PC-3 (cell line): ENCODE measurements at regions of chr19 and their contacts with region 1.

Region 1: DNA sequence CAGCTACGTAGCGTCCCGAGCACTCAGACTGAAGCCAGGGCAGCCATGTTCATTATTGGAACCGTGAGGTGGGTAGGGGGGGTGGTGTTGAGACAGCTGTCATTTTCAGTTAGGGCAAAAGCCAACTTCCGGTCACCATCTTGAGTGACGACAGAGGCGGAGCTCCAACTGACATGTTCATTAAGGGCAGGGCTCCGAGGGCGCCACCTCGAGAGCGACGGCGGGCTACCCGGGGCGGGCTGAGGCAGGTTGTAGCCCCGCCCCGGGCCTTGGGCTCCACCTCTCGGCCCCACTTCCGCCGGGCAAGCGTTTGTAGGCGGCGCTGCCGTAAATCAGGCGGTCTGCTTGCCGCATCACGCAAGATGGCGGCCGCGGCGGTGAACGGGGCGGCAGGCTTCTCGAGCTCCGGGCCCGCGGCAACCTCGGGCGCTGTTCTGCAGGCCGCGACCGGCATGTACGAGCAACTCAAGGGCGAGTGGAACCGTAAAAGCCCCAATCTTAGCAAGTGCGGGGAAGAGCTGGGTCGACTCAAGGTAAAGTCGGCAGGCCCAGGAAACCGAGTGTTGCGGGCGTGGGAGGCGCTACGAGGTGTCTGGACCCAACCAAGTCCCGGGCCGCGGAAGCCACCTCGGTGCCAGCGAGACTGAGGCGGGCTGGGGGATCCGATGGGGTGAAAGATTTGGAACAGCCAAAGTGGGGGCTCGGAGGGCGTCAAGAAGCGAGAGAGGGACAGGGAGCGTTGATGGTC is at the start of gene PSMD8:
- DNase-seq: peak; percentile 96
- ATAC-seq: peak; percentile 97
- H3K4me3 ChIP-seq: peak within 1 kb of the TSS; percentile 84
- H3K27ac ChIP-seq: peak within 1 kb of the TSS; percentile 64
- H3K4me1 ChIP-seq: peaks cover 15% of the 10 kb centered on the region
- H3K27me3 ChIP-seq: no peaks in the 10 kb centered on the region
- CTCF ChIP-seq: peak; percentile 27; the same call in 1 of the 2 replicates
- total RNA-seq, gene PSMD8: 290 and 367 TPM in 2 replicates

Region 2: DNA sequence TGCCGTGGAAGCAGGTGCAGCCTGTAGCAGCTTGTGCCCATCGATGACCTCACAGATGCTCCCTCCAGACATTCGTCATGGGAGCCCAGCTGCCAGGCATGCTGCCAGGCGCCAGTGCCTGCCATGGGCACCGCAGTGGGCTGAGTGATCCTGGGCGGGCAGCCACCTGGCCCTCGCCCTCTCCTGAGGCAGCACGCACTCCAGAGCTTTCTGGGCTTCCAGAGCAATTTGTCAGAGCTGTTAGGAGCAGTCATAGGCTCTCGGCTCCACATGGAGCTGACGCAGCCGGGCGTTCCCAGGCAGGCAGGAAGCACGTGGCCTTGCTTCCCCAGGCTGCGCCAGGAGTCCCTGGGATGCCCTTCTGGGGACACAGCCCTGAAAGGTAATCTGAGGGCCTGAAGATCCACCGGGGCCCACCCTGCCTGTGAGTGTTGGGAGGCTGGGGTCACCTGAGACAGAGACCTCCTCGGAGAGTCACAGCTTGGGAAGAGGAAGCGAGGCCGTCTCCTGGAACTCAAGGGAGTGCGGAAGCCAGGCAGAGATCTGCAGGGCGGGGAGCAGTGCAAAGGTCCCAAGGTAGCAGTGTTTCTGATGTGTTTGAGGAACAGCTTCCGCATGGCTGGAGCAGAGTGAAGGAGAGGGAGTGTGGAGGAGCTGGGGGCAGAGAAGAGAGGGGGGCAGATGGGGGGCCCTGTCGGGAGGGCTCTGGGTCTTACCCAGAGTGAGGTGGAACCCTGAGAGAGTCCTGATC is 201.1 kb before region 1 on chr19:
- CTCF ChIA-PET with region 1: no interaction called
- POLR2A ChIA-PET with region 1: no interaction called
- intact Hi-C with region 1: no loop called
- DNase-seq: no peak
- ATAC-seq: no peak
- H3K4me3 ChIP-seq: no peak overlapping the region
- H3K27ac ChIP-seq: no peak overlapping the region
- H3K4me1 ChIP-seq: no peaks in the 10 kb centered on the region
- H3K27me3 ChIP-seq: no peaks in the 10 kb centered on the region
- CTCF ChIP-seq: no peak

Region 3: GRCh38 chr19:38209152-38209551 is 165.5 kb before region 1 on chr19:
- CTCF ChIA-PET with region 1: no interaction called
- POLR2A ChIA-PET with region 1: interaction called, 10 read pairs
- intact Hi-C with region 1: no loop called
- DNase-seq: no peak
- ATAC-seq: no peak; the same call in 1 of the 2 replicates
- H3K4me3 ChIP-seq: no peak overlapping the region
- H3K27ac ChIP-seq: no peak overlapping the region
- H3K4me1 ChIP-seq: no peaks in the 10 kb centered on the region
- H3K27me3 ChIP-seq: no peaks in the 10 kb centered on the region
- CTCF ChIP-seq: no peak

Region 4: GRCh38 chr19:38315657-38316476 is 58.7 kb before region 1 on chr19 and contains the start of gene YIF1B:
- CTCF ChIA-PET with region 1: no interaction called
- POLR2A ChIA-PET with region 1: no interaction called
- intact Hi-C with region 1: no loop called
- DNase-seq: peak; percentile 91
- ATAC-seq: peak; percentile 89
- H3K4me3 ChIP-seq: peak within 1 kb of the TSS; percentile 80
- H3K27ac ChIP-seq: peak within 1 kb of the TSS; percentile 51
- H3K4me1 ChIP-seq: peaks cover 5% of the 10 kb centered on the region; the same call in 1 of the 2 replicates
- H3K27me3 ChIP-seq: no peaks in the 10 kb centered on the region
- CTCF ChIP-seq: no peak
- total RNA-seq, gene YIF1B: 62.9 and 72.3 TPM in 2 replicates

Region 5: GRCh38 chr19:38387550-38388348 is 13.1 kb after region 1 on chr19 and contains the start of gene GGN:
- CTCF ChIA-PET with region 1: interaction called, 7 read pairs
- POLR2A ChIA-PET with region 1: interaction called, 17 read pairs
- intact Hi-C with region 1: loop called (anchors 1 kb)
- DNase-seq: peak; percentile 87
- ATAC-seq: peak; percentile 70
- H3K4me3 ChIP-seq: peak within 1 kb of the TSS; percentile 85
- H3K27ac ChIP-seq: peak within 1 kb of the TSS; percentile 56
- H3K4me1 ChIP-seq: peaks cover 7% of the 10 kb centered on the region; the same call in 1 of the 2 replicates
- H3K27me3 ChIP-seq: no peaks in the 10 kb centered on the region
- CTCF ChIP-seq: no peak
- total RNA-seq, gene GGN: 0.29 and 0.73 TPM in 2 replicates

Region 6: DNA sequence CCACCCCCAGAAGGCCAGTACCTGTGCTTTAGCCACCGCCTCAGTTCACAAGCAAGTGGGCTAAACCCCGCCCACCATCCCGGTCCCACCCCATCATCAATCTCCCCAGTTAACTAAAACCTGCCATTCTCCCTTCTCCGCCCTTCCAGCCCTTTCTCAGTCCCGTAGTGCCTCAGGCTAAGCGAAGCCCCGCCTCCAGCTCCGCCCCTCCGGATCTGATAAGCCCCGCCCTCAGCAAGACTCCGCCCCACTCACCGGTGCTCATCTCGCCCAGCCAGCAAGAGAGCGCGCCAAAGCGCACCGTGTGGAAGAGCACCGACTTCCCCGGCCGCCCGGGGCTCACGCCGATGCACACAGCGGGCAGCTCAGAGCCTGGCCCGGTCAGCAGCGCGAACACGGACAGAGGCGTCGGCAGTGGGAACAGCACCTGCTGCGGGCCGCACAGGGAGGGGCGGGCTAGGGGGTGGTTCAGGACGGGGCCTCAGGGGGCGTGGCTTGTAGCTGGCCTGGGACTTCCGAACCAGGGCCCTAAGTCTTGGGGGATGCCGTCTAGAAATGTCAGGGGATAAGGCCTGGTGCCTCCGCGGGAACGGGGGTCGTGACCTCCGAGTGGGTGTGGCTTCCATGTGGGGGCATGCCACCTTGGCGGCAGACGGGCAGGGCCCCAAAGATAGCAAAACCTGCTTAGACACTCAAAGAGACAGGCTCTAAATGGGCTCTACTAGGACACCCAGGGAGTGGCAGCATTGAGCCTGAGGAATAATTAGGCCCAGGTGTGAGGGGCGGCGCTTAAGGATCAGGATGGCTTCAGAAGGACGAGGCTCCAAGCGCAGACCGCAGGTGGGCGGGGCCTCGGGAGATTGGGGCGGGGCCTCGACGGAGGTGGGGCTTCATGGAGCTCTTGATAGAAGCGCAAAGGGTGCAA is 221.7 kb after region 1 on chr19:
- CTCF ChIA-PET with region 1: no interaction called
- POLR2A ChIA-PET with region 1: no interaction called
- intact Hi-C with region 1: no loop called
- DNase-seq: peak; percentile 14
- ATAC-seq: peak; percentile 43
- H3K4me3 ChIP-seq: no peak overlapping the region
- H3K27ac ChIP-seq: no peak overlapping the region
- H3K4me1 ChIP-seq: no peaks in the 10 kb centered on the region
- H3K27me3 ChIP-seq: no peaks in the 10 kb centered on the region
- CTCF ChIP-seq: no peak

Region 7: GRCh38 chr19:39363901-39364457 is 989.4 kb after region 1 on chr19:
- CTCF ChIA-PET with region 1: no interaction called
- POLR2A ChIA-PET with region 1: no interaction called
- intact Hi-C with region 1: no loop called
- DNase-seq: no peak
- ATAC-seq: no peak
- H3K4me3 ChIP-seq: no peak overlapping the region
- H3K27ac ChIP-seq: no peak overlapping the region
- H3K4me1 ChIP-seq: 0 out of 2 replicates have a peak, but pooled peaks cover 5% of the 10 kb centered on the region
- H3K27me3 ChIP-seq: no peaks in the 10 kb centered on the region
- CTCF ChIP-seq: no peak